PC-3 (cell line): ENCODE measurements at regions of chr15 and their contacts with region 1.

Region 1: DNA sequence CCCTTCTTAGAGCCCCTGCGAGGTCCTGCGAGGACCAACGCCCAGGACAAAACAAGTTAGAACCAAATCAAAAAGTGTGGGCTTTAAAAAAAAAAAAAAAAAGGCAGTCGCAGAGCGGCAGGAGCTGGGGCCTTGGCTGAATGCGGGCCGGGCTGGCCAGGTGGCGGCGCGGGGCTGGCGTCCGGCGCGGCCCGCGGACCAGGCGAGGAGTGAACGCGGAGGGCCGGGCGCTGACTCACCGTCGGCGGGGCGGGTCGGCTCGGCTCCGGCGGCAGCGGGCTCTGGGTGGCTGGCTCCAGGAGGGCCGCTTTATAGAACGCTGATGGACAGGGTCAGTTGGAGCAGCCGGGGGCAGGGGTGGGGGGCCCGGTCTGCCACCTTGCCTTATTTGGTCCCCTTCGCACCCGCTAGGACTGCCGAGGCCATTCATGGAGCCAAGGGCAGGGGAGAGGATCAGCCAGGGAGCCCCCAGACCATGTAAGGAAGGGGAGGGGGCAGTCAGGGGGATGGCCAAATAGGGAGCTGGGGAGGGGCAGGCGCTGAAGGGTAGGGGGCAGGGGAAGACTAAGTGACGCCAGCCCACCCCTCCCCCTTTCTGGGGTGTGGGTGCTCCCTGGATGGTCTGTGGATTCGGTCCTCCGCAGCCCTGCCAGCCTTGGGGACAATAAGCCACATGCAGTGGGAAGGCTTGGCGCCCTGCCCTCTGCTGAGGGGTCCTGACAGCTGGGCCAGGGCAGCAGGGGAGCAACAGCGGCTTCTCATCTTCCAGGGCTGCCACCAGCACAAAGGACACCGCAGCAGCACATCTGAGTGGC is at the start of gene ACTC1:
- DNase-seq: peak; percentile 53
- ATAC-seq: peak; percentile 98
- H3K4me3 ChIP-seq: peak within 1 kb of the TSS; percentile 49; the same call in 1 of the 2 replicates
- H3K27ac ChIP-seq: no peak within 1 kb of the TSS
- H3K4me1 ChIP-seq: peaks cover 4% of the 10 kb centered on the region; the same call in 1 of the 2 replicates
- H3K27me3 ChIP-seq: peaks cover 59% of the 10 kb centered on the region
- CTCF ChIP-seq: no peak; the same call in 1 of the 2 replicates
- total RNA-seq, gene ACTC1: not detected in 2 replicates

Region 2: GRCh38 chr15:34621675-34622074 is 173.8 kb before region 1 on chr15:
- CTCF ChIA-PET with region 1: no interaction called
- POLR2A ChIA-PET with region 1: interaction called, 4 read pairs
- intact Hi-C with region 1: loop called (anchors 10 kb)
- DNase-seq: peak; percentile 64
- ATAC-seq: peak; percentile 79
- H3K4me3 ChIP-seq: no peak overlapping the region
- H3K27ac ChIP-seq: no peak overlapping the region
- H3K4me1 ChIP-seq: peaks cover 12% of the 10 kb centered on the region
- H3K27me3 ChIP-seq: peaks cover 13% of the 10 kb centered on the region
- CTCF ChIP-seq: peak; percentile 85

Region 3: DNA sequence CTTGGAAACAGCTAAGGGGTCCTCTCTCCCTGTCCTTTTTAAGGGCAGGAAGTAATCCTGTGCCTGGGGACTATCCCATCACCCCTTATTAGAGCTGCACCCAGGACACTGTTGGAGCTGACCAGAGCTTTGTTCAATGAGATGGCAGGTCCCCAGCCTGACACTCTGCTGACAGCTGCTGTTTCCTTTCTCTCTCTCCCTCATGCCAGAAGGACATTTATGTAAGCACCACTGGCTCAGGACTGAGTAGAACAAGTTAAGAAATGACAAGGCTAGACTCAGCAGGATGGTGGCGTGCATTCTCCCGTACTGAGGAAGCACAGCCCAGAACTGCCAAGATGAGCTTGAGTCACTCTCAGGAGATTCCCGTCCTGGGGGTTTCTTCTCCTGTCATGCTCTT is 58.0 kb before region 1 on chr15:
- CTCF ChIA-PET with region 1: interaction called, 14 read pairs
- POLR2A ChIA-PET with region 1: no interaction called
- intact Hi-C with region 1: no loop called
- DNase-seq: no peak
- ATAC-seq: no peak
- H3K4me3 ChIP-seq: no peak overlapping the region
- H3K27ac ChIP-seq: no peak overlapping the region
- H3K4me1 ChIP-seq: no peaks in the 10 kb centered on the region
- H3K27me3 ChIP-seq: peaks cover 97% of the 10 kb centered on the region
- CTCF ChIP-seq: no peak

Region 4: GRCh38 chr15:34812369-34812768 is 16.9 kb after region 1 on chr15:
- CTCF ChIA-PET with region 1: no interaction called
- POLR2A ChIA-PET with region 1: no interaction called
- intact Hi-C with region 1: no loop called
- DNase-seq: no peak
- ATAC-seq: 0 out of 2 replicates have a peak, but pooled peaks have one; percentile 31
- H3K4me3 ChIP-seq: no peak overlapping the region
- H3K27ac ChIP-seq: no peak overlapping the region
- H3K4me1 ChIP-seq: peaks cover 12% of the 10 kb centered on the region; the same call in 1 of the 2 replicates
- H3K27me3 ChIP-seq: 0 out of 2 replicates have a peak, but pooled peaks cover 3% of the 10 kb centered on the region
- CTCF ChIP-seq: no peak

Region 5: DNA sequence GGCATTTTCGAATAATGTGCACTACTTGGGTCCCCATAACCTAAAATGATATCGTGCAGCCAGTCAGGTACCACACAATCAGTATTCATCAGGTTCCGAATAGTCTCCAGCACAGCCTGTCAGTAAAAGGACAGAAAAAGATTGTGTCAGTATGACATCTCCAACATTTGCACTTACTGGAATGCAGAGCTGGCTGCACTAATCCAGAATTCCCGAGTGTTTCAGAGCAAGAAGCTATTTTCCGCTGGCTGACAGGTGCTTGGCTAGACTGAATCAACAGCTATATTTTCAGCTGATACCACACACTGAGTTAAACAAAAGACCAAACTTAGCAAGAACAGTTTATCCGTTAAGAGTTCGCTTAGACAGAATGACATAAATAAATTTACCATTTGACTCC is 105.3 kb after region 1 on chr15:
- CTCF ChIA-PET with region 1: no interaction called
- POLR2A ChIA-PET with region 1: no interaction called
- intact Hi-C with region 1: loop called (anchors 10 kb)
- DNase-seq: no peak
- ATAC-seq: no peak
- H3K4me3 ChIP-seq: no peak overlapping the region
- H3K27ac ChIP-seq: no peak overlapping the region
- H3K4me1 ChIP-seq: no peaks in the 10 kb centered on the region
- H3K27me3 ChIP-seq: no peaks in the 10 kb centered on the region
- CTCF ChIP-seq: no peak